HepG2 (cell line): ENCODE measurements at regions of chr6 and their contacts with region 1.

Region 1: DNA sequence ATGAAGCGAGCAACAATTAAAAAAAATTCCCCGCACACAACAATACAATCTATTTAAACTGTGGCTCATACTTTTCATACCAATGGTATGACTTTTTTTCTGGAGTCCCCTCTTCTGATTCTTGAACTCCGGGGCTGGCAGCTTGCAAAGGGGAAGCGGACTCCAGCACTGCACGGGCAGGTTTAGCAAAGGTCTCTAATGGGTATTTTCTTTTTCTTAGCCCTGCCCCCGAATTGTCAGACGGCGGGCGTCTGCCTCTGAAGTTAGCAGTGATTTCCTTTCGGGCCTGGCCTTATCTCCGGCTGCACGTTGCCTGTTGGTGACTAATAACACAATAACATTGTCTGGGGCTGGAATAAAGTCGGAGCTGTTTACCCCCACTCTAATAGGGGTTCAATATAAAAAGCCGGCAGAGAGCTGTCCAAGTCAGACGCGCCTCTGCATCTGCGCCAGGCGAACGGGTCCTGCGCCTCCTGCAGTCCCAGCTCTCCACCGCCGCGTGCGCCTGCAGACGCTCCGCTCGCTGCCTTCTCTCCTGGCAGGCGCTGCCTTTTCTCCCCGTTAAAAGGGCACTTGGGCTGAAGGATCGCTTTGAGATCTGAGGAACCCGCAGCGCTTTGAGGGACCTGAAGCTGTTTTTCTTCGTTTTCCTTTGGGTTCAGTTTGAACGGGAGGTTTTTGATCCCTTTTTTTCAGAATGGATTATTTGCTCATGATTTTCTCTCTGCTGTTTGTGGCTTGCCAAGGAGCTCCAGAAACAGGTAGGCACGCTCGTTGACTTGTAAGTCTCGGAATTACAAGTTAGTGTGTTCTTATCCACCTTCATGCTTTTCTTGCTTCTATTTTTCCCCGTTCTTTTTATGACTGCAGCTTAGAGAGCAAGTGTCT is at the start of gene EDN1:
- DNase-seq: peak; percentile 57
- ATAC-seq: peak; percentile 95
- H3K4me3 ChIP-seq: peak within 1 kb of the TSS; percentile 41 to 58 (median 56)
- H3K27ac ChIP-seq: no peak within 1 kb of the TSS
- H3K4me1 ChIP-seq: peaks cover 29% of the 10 kb centered on the region
- H3K27me3 ChIP-seq: peaks cover 0 to 37% of the 10 kb centered on the region in 2 experiments; a peak in 3 of 5 replicates
- CTCF ChIP-seq: peak; percentile 76
- EP300 ChIP-seq: no peak
- POLR2A ChIP-seq: no peak
- RAD21 ChIP-seq: 0 out of 2 replicates have a peak, but pooled peaks have one; percentile 34
- total RNA-seq, gene EDN1: 0.15 and 0.21 TPM in 2 replicates

Region 2: GRCh38 chr6:11585426-11586016 is 704.7 kb before region 1 on chr6:
- CTCF ChIA-PET with region 1: interaction called, 8 read pairs
- POLR2A ChIA-PET with region 1: no interaction called
- in situ Hi-C with region 1: no loop called
- intact Hi-C with region 1: loop called (anchors 1 kb)
- DNase-seq: peak; percentile 55
- ATAC-seq: peak; percentile 62
- H3K4me3 ChIP-seq: no peak overlapping the region
- H3K27ac ChIP-seq: no peak overlapping the region
- H3K4me1 ChIP-seq: peaks cover 13% of the 10 kb centered on the region
- H3K27me3 ChIP-seq: no peaks in the 10 kb centered on the region; a peak in 1 of 5 replicates
- CTCF ChIP-seq: peak; percentile 74
- EP300 ChIP-seq: no peak
- POLR2A ChIP-seq: no peak
- RAD21 ChIP-seq: peak; percentile 51; the same call in 1 of the 2 replicates

Region 3: GRCh38 chr6:11700118-11700718 is 590.0 kb before region 1 on chr6:
- CTCF ChIA-PET with region 1: interaction called, 3 read pairs
- POLR2A ChIA-PET with region 1: no interaction called
- in situ Hi-C with region 1: no loop called
- intact Hi-C with region 1: loop called (anchors 1 kb)
- DNase-seq: peak; percentile 56
- ATAC-seq: no peak; the same call in 2 of the 3 replicates
- H3K4me3 ChIP-seq: no peak overlapping the region
- H3K27ac ChIP-seq: no peak overlapping the region
- H3K4me1 ChIP-seq: no peaks in the 10 kb centered on the region
- H3K27me3 ChIP-seq: no peaks in the 10 kb centered on the region
- CTCF ChIP-seq: peak; percentile 40
- EP300 ChIP-seq: no peak
- POLR2A ChIP-seq: no peak
- RAD21 ChIP-seq: no peak

Region 4: DNA sequence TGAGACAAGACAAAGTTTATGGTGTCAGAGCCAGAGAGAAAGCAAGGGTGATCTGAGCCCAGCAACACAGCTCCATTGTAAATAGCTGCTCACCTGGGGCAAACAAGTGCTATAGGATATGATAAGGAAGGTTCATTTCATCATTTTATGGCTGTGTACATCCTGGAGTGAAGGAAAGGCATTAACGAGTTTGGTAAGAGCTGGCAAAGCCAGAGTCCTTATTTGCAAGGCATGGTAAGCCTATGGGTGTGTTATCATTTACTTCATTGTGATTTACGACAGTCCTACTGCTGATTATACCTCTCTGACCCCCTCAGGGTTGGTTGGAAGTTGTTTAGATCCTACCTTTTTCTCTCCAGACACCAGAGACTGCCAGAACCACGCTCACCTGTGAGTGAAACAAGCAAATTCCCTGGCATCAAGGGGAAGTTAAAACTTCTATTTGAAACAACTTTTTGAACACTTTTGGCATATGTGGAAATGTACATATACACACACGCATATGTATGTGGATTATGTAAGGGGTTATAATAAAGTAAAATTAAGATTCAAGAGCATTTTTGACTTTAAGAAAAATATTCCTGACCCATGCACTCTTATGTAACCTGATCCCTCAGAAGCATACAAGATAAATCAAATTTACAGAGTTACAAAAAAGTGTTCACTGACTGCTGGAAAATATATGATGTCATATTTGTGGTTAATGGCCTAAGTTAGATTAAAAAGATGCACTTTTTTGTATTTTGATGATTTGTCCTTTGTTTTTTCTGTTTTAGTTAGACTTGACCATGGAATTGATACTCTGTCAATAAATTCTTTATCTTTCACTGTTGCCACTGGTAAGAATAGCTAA is 40.4 kb before region 1 on chr6:
- CTCF ChIA-PET with region 1: no interaction called
- POLR2A ChIA-PET with region 1: no interaction called
- in situ Hi-C with region 1: no loop called
- intact Hi-C with region 1: no loop called
- DNase-seq: no peak
- ATAC-seq: no peak
- H3K4me3 ChIP-seq: no peak overlapping the region
- H3K27ac ChIP-seq: no peak overlapping the region
- H3K4me1 ChIP-seq: no peaks in the 10 kb centered on the region
- H3K27me3 ChIP-seq: no peaks in the 10 kb centered on the region
- CTCF ChIP-seq: no peak
- EP300 ChIP-seq: no peak
- POLR2A ChIP-seq: no peak
- RAD21 ChIP-seq: no peak

Region 5: DNA sequence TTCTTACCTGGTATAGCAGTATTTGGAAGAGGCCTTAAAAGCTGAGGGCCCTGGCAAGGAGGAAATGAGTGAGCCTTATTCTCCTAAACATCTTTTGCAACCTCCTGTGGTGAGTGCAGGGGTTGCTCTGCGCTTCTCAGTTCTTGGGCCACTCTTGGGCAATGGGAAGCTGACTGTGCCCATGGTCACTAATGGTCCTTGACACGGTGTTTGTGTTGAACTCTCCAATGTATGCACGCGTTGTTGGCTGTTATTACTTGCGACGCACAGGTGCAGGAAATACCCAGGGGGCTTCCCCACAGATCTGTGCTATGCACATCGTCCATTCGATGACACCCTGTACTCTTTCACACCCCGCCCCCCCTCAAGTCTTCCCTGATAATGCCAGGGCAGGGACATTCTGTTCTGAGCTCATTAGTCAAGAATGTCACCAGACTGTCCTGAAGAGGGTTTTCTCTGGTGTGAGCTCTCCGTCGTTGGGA is 79.6 kb after region 1 on chr6:
- CTCF ChIA-PET with region 1: no interaction called
- POLR2A ChIA-PET with region 1: interaction called, 4 read pairs
- in situ Hi-C with region 1: no loop called
- intact Hi-C with region 1: loop called (anchors 5 kb)
- DNase-seq: no peak
- ATAC-seq: no peak
- H3K4me3 ChIP-seq: no peak overlapping the region
- H3K27ac ChIP-seq: no peak overlapping the region
- H3K4me1 ChIP-seq: peaks cover 47% of the 10 kb centered on the region
- H3K27me3 ChIP-seq: no peaks in the 10 kb centered on the region
- CTCF ChIP-seq: no peak
- EP300 ChIP-seq: no peak
- POLR2A ChIP-seq: no peak
- RAD21 ChIP-seq: no peak

Region 6: DNA sequence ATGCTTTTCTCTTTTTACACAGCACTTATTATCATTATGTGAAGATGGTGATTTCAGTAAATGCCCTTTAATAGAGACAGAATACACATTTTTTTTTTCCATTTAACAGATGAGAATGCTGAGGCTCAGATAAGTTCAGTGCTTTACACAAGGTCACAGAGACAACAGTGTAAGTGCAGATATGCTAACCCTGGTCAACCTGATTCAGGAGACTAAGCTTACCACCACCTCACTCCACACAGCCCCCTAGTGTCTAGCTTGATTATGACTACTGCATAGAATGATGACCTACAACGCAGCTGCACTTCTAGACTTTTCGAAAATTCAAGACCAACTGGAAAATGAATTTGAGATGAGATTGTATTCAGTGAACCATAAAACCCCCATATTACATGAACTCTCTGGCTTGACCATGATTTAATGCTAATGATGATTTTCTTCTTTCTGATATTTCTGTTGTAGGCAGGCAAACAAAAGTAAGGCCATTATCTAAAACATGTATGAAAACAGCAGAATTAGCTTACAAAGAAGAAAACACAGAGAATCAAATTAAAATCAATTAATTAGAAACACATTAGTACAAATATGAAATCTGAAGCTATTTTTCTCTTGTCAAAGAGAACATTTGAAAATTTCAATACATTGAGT is 214.3 kb after region 1 on chr6:
- CTCF ChIA-PET with region 1: interaction called, 22 read pairs
- POLR2A ChIA-PET with region 1: no interaction called
- in situ Hi-C with region 1: no loop called
- intact Hi-C with region 1: loop called (anchors 1 kb)
- DNase-seq: peak; percentile 47
- ATAC-seq: peak; percentile 96
- H3K4me3 ChIP-seq: no peak overlapping the region
- H3K27ac ChIP-seq: no peak overlapping the region
- H3K4me1 ChIP-seq: no peaks in the 10 kb centered on the region
- H3K27me3 ChIP-seq: no peaks in the 10 kb centered on the region
- CTCF ChIP-seq: peak; percentile 81
- EP300 ChIP-seq: no peak
- POLR2A ChIP-seq: no peak
- RAD21 ChIP-seq: peak; percentile 48